Posterior cingulate gyrus (tissue), 11 donors: ENCODE measurements at regions of chr9 and their contacts with region 1.

Region 1: GRCh38 chr9:21395778-21396717 is 10.8 kb upstream of the IFNA2 start:
- DNase-seq: peak; percentile 51 to 94 (median 74)

Region 2: DNA sequence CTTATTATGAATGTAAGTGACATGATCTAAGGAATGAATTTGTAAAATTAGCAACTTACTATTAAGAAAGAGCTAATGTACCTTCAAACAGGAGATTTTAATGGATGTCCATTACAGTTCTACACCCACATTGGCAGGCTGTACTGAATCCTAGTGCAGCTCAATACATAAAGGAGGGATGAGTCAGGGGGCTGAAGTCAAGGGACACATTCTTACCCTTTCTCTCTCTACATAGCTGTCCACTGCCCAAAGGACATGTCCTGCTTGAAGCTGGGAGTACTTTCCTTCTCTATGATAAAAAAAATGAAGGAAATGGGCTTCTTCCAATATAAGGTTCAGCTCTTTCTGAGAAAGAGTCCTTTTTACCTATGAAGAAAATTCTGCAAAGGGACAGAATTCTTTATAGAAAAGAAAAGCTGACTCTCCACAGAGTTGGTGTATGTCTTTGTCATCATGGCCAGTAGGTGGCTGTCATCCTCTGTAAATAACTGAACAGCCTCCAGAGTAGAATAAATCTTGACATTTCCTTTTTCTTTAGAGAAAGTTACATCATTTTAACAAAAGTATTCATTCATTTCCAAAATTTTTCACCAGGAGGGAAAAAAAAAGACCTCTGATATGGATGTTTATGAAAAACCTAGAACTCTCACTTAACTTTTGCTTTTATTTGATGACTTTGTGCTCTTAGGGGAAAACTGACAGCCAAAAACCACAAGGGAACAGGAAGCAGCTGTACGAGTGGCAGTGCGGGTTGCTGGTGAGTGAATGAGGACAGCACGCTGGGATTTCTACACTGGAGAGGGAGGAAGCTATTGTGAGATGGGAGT is 143.1 kb before region 1 on chr9:
- intact Hi-C with region 1: loop called (anchors 5 kb)
- DNase-seq: peak in 7 of 10 donors; percentile 21 to 77 (median 25)

Region 3: DNA sequence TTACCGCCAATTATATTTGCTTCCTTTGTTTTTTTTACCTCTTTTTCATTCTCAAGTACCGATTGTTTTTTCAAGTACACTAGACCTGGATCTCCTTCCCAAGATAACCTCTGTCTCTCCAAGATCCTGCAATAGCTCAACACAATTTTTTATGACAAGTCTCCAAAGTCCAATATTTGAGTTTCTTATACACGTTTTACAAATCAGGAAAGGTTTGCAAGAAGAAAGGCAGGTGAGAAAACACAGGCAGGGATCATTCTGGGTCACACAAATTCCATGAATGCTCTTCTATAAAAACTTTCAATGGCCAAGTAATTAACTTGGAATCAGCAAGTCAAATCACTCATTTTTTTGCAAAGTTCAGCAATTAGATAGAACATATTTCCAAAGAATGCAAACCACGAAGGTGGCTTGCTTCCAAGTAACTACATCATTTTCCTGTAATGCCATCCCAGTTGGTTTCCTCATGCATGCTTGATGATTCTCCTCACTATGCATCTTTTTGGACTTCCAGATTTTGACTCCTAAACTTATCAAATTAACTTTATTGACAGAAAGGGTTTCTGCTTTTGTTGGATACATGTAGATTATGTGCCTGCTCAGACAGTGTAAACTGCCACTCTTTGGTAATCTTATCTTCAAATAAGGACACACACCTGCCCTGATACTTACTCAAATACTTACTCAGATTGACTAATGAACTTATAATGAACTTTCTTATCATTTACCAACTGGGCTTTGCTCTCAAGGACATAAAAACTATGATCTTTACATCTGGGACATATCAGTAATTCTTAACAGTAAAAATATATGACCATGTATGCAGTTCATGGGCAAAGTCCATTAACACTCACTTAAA is 110.8 kb after region 1 on chr9:
- intact Hi-C with region 1: no loop called
- DNase-seq: no peak

Region 4: DNA sequence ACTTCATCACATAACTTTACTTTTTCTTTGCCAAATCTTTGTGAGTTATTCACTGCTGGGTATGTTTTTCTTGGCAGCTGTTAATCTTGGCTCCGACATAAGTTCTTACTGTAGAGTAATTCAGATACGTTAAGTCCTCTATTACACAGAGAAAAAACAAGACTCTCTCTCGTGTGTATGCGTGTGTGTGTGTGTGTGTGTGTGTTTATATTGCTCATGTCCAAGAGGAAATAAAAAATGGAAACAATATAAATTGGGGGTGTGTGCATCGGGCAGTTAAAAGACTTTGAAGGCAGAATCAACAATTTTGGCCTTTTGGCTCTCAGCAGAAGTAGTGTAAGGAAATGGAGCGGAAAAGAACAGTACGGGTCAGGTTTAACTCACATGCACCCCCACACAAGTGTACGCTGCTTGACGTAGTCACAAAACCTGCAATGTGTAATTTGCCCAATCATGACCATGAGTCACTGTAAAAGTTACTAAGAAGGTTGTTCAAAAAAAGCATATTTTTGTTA is 153.3 kb after region 1 on chr9:
- intact Hi-C with region 1: no loop called
- DNase-seq: peak in 1 of 10 donors; percentile 24